IMR-90 (cell line): ENCODE measurements at regions of chr2 and their contacts with region 1.

Region 1: GRCh38 chr2:37464067-37464466 is 119.6 kb downstream of the QPCT start:
- DNase-seq: no peak
- ATAC-seq: no peak
- H3K4me3 ChIP-seq: no peak overlapping the region
- H3K27ac ChIP-seq: no peak overlapping the region
- H3K4me1 ChIP-seq: peaks cover 14% of the 10 kb centered on the region
- H3K27me3 ChIP-seq: no peaks in the 10 kb centered on the region
- CTCF ChIP-seq: no peak
- POLR2A ChIP-seq: no peak
- RAD21 ChIP-seq: no peak

Region 2: DNA sequence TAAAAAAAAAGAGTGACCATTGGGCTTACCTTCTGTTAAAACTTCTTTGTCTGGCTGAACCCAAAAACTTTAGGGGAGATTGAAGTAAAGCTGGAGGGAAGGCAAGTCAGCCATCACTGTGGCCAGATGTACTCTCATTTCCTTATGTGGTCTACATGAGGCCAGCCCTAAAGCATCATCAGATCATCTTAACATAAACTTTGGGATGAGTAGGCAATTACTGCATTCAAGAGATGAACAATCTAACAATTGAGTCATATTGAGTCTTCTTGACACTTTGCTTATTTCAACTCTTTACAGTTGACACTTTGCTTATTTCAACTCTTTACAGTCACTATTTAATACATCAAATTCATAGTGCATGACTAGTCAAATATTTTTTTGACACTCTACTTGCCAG is 36.0 kb after region 1 on chr2:
- CTCF ChIA-PET with region 1: no interaction called
- POLR2A ChIA-PET with region 1: no interaction called
- dilution Hi-C with region 1: no loop called
- in situ Hi-C with region 1: no loop called
- intact Hi-C with region 1: loop called (anchors 5 kb)
- DNase-seq: peak; percentile 96
- ATAC-seq: peak; percentile 96
- H3K4me3 ChIP-seq: no peak overlapping the region
- H3K27ac ChIP-seq: peak overlapping the region; percentile 2; the same call in 1 of the 2 replicates
- H3K4me1 ChIP-seq: peaks cover 2% of the 10 kb centered on the region; the same call in 1 of the 2 replicates
- H3K27me3 ChIP-seq: no peaks in the 10 kb centered on the region
- CTCF ChIP-seq: no peak
- POLR2A ChIP-seq: no peak
- RAD21 ChIP-seq: 0 out of 2 replicates have a peak, but pooled peaks have one; percentile 21

Region 3: DNA sequence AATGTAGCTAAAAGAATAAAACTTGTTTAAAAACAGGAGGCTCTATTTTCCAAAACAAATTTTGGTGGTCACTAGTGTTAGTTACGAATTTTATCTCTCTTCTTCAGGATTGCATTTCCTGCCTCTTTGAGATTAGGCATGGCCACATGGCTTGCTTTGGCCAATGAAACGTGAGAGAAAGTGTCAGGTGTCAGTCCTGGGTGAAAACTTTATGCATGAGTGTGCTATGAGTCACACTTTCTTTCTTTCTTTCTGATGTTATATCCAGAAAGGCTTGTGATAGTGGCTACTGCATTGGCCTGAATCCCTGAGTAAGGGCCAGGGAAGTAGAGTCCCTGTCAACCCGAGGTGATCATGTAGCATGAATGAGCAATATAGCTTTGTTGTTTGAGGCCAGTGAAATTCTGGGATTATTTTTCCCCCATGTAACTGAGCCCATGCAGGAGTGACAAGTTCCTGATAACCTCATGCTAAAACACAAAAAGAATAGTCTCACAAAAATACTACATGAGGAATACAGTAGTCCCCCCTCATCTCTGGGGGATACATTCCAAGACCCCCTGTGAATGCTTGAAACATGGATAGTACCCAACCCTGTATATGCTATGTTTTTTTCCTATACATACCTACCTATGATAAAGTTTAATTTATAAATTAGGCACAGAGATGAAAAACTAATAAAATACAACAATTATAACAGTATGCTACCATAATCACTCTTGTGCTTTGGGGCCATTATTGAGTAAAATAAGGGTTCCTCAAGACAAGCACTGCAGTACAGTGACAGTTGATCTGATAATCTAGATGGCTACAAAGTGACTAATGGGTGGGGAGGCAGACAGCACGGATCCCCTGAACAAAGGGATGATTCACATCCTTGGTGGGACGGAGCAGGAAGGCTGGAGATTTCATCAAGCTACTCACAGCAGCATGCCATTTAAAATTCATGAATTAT is 97.8 kb after region 1 on chr2:
- CTCF ChIA-PET with region 1: no interaction called
- POLR2A ChIA-PET with region 1: no interaction called
- dilution Hi-C with region 1: no loop called
- in situ Hi-C with region 1: no loop called
- intact Hi-C with region 1: no loop called
- DNase-seq: peak; percentile 94
- ATAC-seq: peak; percentile 67
- H3K4me3 ChIP-seq: no peak overlapping the region
- H3K27ac ChIP-seq: no peak overlapping the region
- H3K4me1 ChIP-seq: peaks cover 14% of the 10 kb centered on the region; the same call in 1 of the 2 replicates
- H3K27me3 ChIP-seq: no peaks in the 10 kb centered on the region
- CTCF ChIP-seq: no peak
- POLR2A ChIP-seq: no peak
- RAD21 ChIP-seq: no peak

Region 4: GRCh38 chr2:37635504-37636380 is 171.7 kb after region 1 on chr2:
- CTCF ChIA-PET with region 1: no interaction called
- POLR2A ChIA-PET with region 1: no interaction called
- dilution Hi-C with region 1: no loop called
- in situ Hi-C with region 1: no loop called
- intact Hi-C with region 1: loop called (anchors 5 kb)
- DNase-seq: peak; percentile 82
- ATAC-seq: no peak
- H3K4me3 ChIP-seq: no peak overlapping the region
- H3K27ac ChIP-seq: no peak overlapping the region
- H3K4me1 ChIP-seq: peaks cover 12% of the 10 kb centered on the region
- H3K27me3 ChIP-seq: no peaks in the 10 kb centered on the region
- CTCF ChIP-seq: no peak
- POLR2A ChIP-seq: no peak
- RAD21 ChIP-seq: no peak

Region 5: GRCh38 chr2:37802899-37803379 is 338.9 kb after region 1 on chr2:
- CTCF ChIA-PET with region 1: no interaction called
- POLR2A ChIA-PET with region 1: no interaction called
- dilution Hi-C with region 1: no loop called
- in situ Hi-C with region 1: no loop called
- intact Hi-C with region 1: no loop called
- DNase-seq: peak; percentile 99
- ATAC-seq: peak; percentile 93
- H3K4me3 ChIP-seq: no peak overlapping the region
- H3K27ac ChIP-seq: peak overlapping the region; percentile 100
- H3K4me1 ChIP-seq: peaks cover 29% of the 10 kb centered on the region
- H3K27me3 ChIP-seq: no peaks in the 10 kb centered on the region
- CTCF ChIP-seq: no peak
- POLR2A ChIP-seq: no peak
- RAD21 ChIP-seq: peak; percentile 28